ENCODE measurements at regions of chr5 and their contacts with region 1.

Region 1: DNA sequence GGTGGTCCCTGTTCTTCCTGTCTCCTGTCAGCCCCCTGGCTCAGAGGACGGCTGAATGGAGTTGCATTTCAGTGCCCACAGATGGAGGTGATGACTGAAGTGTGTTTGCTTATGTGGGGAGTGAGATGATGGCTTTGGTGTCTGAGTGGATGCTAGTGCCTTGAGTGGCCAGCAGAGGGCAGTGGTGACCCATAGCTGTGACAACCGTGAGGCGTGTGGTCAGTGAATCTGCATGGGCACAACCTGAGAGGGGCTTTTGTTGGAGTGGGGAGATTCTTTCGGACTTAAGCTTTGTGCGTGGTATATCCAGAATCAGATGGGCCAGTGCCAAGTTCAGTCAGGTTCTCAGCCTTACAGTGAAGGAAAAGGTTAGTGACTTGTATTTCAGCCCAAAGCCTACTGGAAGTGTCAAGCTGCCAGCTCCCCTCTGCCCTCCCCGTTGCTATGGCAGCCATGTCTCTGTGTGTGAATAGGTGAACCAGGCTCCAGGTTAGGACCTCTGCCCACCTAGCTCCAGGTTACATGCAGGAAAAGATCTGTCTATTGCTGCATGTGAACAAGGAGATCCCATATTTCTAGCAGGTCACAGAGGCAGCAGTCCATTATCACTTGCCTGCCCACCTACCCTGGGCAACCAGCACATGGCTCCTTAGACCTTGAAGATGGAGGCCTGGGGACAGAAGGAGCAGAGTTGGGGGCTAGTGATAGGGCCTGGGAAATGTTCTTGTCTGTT is 14.7 kb upstream of the CXXC5 start:
- DNase-seq: peak; percentile 72 to 82 (median 79)
- H3K4me3 ChIP-seq: no peak overlapping the region
- H3K27ac ChIP-seq: no peak overlapping the region
- H3K4me1 ChIP-seq: peaks cover 9 to 49% (median 37%) of the 10 kb centered on the region in 4 experiments
- H3K27me3 ChIP-seq: no peaks in the 10 kb centered on the region

Region 2: GRCh38 chr5:138610918-138611677 is 1022.4 kb before region 1 on chr5:
- CTCF ChIA-PET with region 1: no interaction called
- POLR2A ChIA-PET with region 1: no interaction called
- DNase-seq: peak; percentile 30 to 64 (median 57)
- H3K4me3 ChIP-seq: peak overlapping the region; percentile 15 to 77 (median 53)
- H3K27ac ChIP-seq: no peak overlapping the region
- H3K4me1 ChIP-seq: peaks cover 0 to 17% (median 14%) of the 10 kb centered on the region in 4 experiments
- H3K27me3 ChIP-seq: no peaks in the 10 kb centered on the region

Region 3: DNA sequence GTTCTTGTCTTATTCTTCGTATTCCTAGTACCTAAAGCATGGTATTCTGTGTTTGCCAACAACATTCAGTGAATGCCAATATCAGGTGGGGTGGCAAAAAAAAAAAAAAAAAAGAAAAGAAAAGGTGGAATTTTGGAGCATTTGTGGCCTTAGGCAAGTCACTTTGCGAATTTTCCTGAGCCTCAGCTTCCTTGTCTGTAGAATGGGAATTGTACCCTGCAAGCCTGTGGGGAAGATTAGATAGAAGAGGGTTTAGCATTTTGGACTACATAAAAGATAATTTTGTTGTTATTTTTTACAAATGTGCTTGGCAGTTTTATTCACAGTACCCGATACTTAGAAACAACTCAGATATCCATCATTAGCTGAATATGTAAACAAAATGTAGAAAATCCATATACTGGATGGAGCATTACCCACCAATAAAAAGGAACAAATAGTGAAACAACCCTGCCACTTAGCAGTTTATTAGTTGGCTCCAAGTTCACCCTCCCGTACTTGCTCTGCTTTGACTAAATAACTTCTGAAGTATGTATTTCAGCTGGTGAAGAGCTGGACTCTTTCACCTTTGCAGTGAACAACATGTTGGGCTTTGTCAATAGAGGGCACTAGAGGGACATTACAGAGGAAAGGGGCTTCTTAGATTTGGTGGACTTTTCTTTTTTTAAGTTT is 58.7 kb before region 1 on chr5:
- CTCF ChIA-PET with region 1: interaction called, 10 read pairs
- POLR2A ChIA-PET with region 1: no interaction called
- DNase-seq: peak; percentile 57 to 78 (median 75)
- H3K4me3 ChIP-seq: no peak overlapping the region
- H3K27ac ChIP-seq: no peak overlapping the region
- H3K4me1 ChIP-seq: peaks cover 4 to 17% (median 10%) of the 10 kb centered on the region in 4 experiments
- H3K27me3 ChIP-seq: no peaks in the 10 kb centered on the region

Region 4: GRCh38 chr5:139660923-139661814 is 27.7 kb after region 1 on chr5:
- CTCF ChIA-PET with region 1: interaction called, 232 read pairs
- POLR2A ChIA-PET with region 1: interaction called, 12 read pairs
- DNase-seq: peak; percentile 88 to 98 (median 96)
- H3K4me3 ChIP-seq: peak overlapping the region in 5 of 7 experiments; percentile 9 to 60 (median 46)
- H3K27ac ChIP-seq: peak overlapping the region; percentile 27 to 82
- H3K4me1 ChIP-seq: peaks cover 9 to 98% (median 97%) of the 10 kb centered on the region in 4 experiments
- H3K27me3 ChIP-seq: no peaks in the 10 kb centered on the region

Region 5: GRCh38 chr5:139690064-139690802 is 56.8 kb after region 1 on chr5:
- CTCF ChIA-PET with region 1: interaction called, 211 read pairs
- POLR2A ChIA-PET with region 1: interaction called, 22 read pairs
- DNase-seq: peak in 2 of 3 donors; percentile 63 to 64
- H3K4me3 ChIP-seq: peak overlapping the region in 2 of 7 experiments; percentile 36 to 61
- H3K27ac ChIP-seq: peak overlapping the region in 1 of 2 experiments; percentile 32
- H3K4me1 ChIP-seq: peaks cover 0 to 79% (median 45%) of the 10 kb centered on the region in 4 experiments
- H3K27me3 ChIP-seq: no peaks in the 10 kb centered on the region

Region 6: DNA sequence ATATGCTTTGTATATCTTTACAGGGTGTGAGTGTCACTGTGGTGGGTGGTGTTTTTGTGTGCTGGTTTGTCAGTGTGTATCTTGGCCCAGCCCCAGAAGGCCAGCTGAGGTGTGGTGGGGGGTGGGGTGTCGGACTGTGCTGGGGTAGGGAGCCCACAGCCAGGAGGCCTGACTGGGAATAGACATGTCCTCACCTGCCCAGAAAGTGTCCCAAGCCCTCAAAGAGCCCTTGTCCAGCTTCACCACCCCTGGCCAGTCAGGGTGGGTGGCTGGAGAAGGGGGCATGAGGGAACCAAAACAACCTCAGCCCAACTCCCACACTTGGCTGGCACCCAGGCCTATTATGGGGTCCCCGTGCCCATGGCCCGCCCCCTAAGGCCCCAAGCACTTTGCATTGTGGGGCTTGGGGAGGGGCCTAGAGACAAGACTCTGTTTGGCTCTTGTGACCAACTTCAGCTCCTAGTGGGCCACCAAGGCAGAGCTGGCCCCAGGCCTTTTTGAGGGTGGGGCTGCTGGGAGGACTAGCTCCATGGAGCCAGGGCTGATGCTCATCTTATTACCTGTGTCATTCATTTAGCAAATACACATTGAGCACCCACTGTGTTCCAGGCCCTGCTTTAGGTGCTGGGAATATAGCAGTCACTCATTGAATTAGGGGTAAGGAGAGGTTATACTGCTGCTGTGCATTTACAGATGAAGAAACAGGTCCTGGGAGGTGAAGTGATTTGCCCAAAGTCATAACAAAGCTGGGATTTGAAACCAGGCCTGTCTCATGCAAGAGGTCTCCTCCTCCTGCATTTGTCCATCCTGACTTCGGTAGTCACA is 105.9 kb after region 1 on chr5:
- CTCF ChIA-PET with region 1: interaction called, 14 read pairs
- POLR2A ChIA-PET with region 1: no interaction called
- DNase-seq: no peak
- H3K4me3 ChIP-seq: no peak overlapping the region
- H3K27ac ChIP-seq: no peak overlapping the region
- H3K4me1 ChIP-seq: peaks cover 0 to 2% (median under 1%) of the 10 kb centered on the region in 4 experiments
- H3K27me3 ChIP-seq: no peaks in the 10 kb centered on the region

Region 7: GRCh38 chr5:139765409-139766217 is 132.2 kb after region 1 on chr5:
- CTCF ChIA-PET with region 1: interaction called, 196 read pairs
- POLR2A ChIA-PET with region 1: interaction called, 4 read pairs
- DNase-seq: peak; percentile 72 to 83 (median 83)
- H3K4me3 ChIP-seq: peak overlapping the region; percentile 30 to 78 (median 63)
- H3K27ac ChIP-seq: no peak overlapping the region
- H3K4me1 ChIP-seq: peaks cover 0 to 20% (median 7%) of the 10 kb centered on the region in 4 experiments
- H3K27me3 ChIP-seq: peaks cover 0 to 30% (median 8%) of the 10 kb centered on the region in 5 experiments